OCI-LY7 (cell line): ENCODE measurements at regions of chr3 and their contacts with region 1.

Region 1: DNA sequence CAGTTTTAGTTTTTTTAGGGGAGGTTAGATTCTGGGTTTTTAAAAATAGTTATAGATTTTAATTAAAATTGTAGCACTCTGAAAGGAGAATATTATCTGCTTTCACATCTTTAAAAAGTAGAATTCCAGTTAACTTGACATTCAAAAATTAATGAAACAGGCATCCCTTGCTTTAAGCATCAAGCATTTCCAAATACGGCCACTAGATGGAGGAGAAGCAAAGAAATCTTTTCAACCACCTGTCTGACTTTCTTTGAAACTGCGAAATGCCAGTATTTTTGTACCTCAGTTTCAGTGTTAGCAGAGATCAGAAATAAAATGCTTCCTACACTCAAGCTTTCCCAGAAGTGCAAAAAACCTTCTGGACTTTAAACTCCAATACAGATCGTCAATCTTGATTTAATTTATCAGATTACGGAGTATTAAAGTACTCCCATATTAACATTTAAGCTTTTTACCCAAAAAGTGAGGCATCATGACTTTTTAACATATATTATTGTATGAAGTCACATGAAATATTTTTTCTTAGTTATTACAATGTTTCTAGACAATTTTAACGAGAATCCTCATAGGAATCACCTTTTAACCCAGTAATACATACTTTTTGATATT is 153.3 kb downstream of the P3H2 start:
- DNase-seq: peak; percentile 51
- H3K4me3 ChIP-seq: no peak overlapping the region
- H3K27ac ChIP-seq: no peak overlapping the region
- H3K4me1 ChIP-seq: no peaks in the 10 kb centered on the region
- CTCF ChIP-seq: peak; percentile 88

Region 2: DNA sequence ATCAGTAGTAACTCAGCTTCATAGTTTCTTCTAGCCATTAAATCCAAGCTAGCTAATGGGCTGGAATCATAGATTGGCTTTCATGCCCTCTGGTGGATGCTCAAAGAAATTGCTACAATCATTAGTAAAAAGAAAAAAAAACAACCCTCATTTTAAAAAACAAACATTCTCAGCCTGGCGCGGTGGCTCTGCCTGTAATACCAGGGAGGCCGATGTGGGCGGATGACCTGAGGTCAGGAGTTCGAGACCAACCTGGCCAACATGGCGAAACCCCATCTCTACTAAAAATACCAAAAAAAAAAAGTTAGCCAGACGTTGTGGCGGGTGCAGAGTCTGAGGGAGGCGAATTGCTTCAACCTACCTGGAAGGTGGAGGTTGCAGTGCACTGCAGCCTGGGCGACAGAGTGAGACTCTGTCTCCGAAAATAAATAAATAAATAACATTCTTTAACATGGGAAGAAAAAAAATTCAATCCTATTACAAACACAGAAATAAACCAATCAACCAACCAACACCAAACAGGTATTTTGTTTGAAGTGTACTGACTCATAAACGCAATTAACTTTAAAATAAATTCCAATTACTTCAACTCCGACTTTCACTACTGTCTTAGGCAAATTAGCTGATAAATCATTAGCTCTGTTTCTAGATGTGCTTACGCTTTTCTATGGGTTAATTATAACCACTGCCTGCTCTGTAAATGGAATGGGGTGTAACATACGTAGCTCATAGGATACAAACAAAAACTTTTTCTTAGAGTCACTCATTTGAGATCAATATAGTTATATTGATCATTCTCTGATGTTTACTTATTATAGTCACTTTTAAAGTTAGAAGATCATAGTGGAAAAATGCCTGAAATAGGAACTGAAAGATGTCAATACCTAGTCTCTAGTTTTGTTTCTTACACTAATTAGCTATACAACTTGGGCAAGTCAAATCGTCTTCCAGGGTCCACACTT is 457.4 kb after region 1 on chr3:
- CTCF ChIA-PET with region 1: no interaction called
- POLR2A ChIA-PET with region 1: no interaction called
- intact Hi-C with region 1: loop called (anchors 2 kb)
- DNase-seq: peak; percentile 55
- H3K4me3 ChIP-seq: no peak overlapping the region
- H3K27ac ChIP-seq: no peak overlapping the region
- H3K4me1 ChIP-seq: no peaks in the 10 kb centered on the region
- CTCF ChIP-seq: peak; percentile 83

Region 3: DNA sequence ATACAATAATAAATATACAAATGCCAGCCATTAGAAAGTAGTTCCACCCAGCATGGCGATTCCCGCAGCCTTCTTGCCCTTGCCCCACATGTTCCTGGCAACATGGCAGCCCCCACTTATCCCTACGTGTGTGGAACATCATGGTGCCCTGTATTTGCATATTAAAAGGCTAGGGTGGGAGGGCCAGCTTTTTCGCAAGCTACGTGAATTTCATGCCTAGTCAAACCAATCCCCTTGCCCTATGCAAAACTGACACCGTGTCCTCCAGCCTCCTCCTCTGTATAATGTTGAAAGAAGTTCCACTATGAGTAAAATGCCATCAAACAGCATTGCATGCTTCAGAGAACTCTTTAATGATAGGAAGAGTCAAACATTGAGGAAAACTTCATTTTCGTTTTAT is 717.4 kb after region 1 on chr3:
- CTCF ChIA-PET with region 1: no interaction called
- POLR2A ChIA-PET with region 1: no interaction called
- intact Hi-C with region 1: no loop called
- DNase-seq: no peak
- H3K4me3 ChIP-seq: no peak overlapping the region
- H3K27ac ChIP-seq: no peak overlapping the region
- H3K4me1 ChIP-seq: no peaks in the 10 kb centered on the region
- CTCF ChIP-seq: no peak